B cell (primary cell): ENCODE measurements at regions of chr5 and their contacts with region 1.

Region 1: DNA sequence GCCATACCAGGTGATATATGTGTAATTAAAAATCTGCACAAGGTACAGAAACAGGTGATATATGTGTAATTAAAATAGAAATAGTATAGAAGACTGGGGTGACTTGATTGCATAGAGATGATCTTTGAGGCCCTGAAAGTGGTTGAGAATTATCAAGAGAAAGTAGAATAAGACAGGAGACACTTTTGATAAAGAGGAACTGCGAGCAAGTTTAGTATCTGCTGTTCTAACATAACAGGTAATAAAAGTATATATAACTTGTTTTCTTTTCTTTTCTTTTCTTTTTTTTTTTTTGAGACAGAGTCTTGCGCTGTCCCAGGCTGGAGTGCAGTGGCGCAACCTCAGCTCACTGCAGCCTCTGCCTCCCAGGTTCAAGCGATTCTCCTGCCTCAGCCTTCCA is 5.4 kb downstream of the SNX2 start:
- DNase-seq: peak; percentile 42
- ATAC-seq: peak; percentile 35
- H3K4me3 ChIP-seq: peak overlapping the region in 4 of 5 experiments; percentile 25 to 95 (median 34)
- H3K4me3 Mint-ChIP-seq: peak overlapping the region; percentile 74
- H3K27ac ChIP-seq: peak overlapping the region; percentile 57 to 100
- H3K27ac Mint-ChIP-seq: peak overlapping the region; percentile 82
- H3K4me1 ChIP-seq: peaks cover 44 to 58% of the 10 kb centered on the region in 2 donors
- H3K4me1 Mint-ChIP-seq: peaks cover 63% of the 10 kb centered on the region
- H3K27me3 ChIP-seq: no peaks in the 10 kb centered on the region
- H3K27me3 Mint-ChIP-seq: no peaks in the 10 kb centered on the region
- CTCF ChIP-seq: no peak

Region 2: GRCh38 chr5:122639864-122640263 is 140.4 kb before region 1 on chr5:
- CTCF ChIA-PET with region 1: no interaction called
- POLR2A ChIA-PET with region 1: no interaction called
- intact Hi-C with region 1: no loop called
- DNase-seq: no peak
- ATAC-seq: no peak
- H3K4me3 ChIP-seq: no peak overlapping the region
- H3K4me3 Mint-ChIP-seq: no peak overlapping the region
- H3K27ac ChIP-seq: no peak overlapping the region
- H3K27ac Mint-ChIP-seq: no peak overlapping the region
- H3K4me1 ChIP-seq: no peaks in the 10 kb centered on the region
- H3K4me1 Mint-ChIP-seq: no peaks in the 10 kb centered on the region
- H3K27me3 ChIP-seq: peaks cover 0 to 3% (median 0%) of the 10 kb centered on the region in 4 experiments
- H3K27me3 Mint-ChIP-seq: peaks cover 11% of the 10 kb centered on the region
- CTCF ChIP-seq: no peak

Region 3: DNA sequence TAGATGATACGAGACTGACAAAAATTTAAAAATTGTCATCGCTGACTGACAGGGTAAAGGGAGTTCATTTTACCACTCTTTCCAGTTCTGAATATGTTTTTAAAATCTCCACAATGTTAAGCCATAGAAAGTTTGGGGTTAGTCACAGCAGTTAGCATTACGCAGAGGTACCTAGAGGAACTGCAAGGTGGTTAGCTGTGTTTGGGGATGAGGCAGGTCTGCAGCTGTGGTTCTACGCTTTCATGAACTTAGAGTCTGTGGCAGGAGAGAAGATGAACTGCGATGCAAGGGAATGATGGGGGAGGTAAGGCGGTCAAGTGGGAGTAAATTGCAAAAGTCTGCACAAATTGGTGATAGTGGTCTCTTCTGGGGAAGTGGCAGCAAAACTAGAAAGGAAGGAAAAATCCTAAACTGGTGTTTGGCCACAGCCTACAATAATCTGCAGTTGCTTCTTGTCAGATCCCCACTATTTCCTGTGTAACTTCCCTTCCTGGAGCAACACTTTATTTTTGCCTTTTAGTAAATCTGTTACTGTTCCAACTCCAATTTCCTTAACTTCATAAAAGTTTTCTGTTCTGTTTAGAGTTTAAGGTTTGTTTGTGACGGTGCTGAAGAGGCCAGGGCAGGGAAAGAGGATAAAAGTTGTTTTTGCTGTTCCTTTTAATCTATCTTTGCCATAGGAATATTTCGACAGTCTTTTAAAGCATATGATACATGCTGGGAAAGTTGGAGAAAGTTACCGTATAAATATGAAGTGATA is 44.0 kb before region 1 on chr5:
- CTCF ChIA-PET with region 1: no interaction called
- POLR2A ChIA-PET with region 1: no interaction called
- intact Hi-C with region 1: loop called (anchors 5 kb)
- DNase-seq: peak; percentile 48
- ATAC-seq: peak; percentile 87
- H3K4me3 ChIP-seq: no peak overlapping the region
- H3K4me3 Mint-ChIP-seq: peak overlapping the region; percentile 44
- H3K27ac ChIP-seq: no peak overlapping the region
- H3K27ac Mint-ChIP-seq: peak overlapping the region; percentile 8
- H3K4me1 ChIP-seq: peaks cover 8 to 11% of the 10 kb centered on the region in 2 donors
- H3K4me1 Mint-ChIP-seq: peaks cover 18% of the 10 kb centered on the region
- H3K27me3 ChIP-seq: no peaks in the 10 kb centered on the region
- H3K27me3 Mint-ChIP-seq: no peaks in the 10 kb centered on the region
- CTCF ChIP-seq: no peak

Region 4: GRCh38 chr5:122816756-122817155 is 36.5 kb after region 1 on chr5:
- CTCF ChIA-PET with region 1: no interaction called
- POLR2A ChIA-PET with region 1: no interaction called
- intact Hi-C with region 1: loop called (anchors 5 kb)
- DNase-seq: no peak
- ATAC-seq: no peak
- H3K4me3 ChIP-seq: no peak overlapping the region
- H3K4me3 Mint-ChIP-seq: no peak overlapping the region
- H3K27ac ChIP-seq: peak overlapping the region in 1 of 2 donors; percentile 48
- H3K27ac Mint-ChIP-seq: peak overlapping the region; percentile 2
- H3K4me1 ChIP-seq: no peaks in the 10 kb centered on the region
- H3K4me1 Mint-ChIP-seq: peaks cover 4% of the 10 kb centered on the region
- H3K27me3 ChIP-seq: no peaks in the 10 kb centered on the region
- H3K27me3 Mint-ChIP-seq: no peaks in the 10 kb centered on the region
- CTCF ChIP-seq: no peak